Endothelial cell of umbilical vein (primary cell): ENCODE measurements at regions of chr5 and their contacts with region 1.

Region 1: GRCh38 chr5:140261403-140262171 is 41.3 kb downstream of the PFDN1 start:
- DNase-seq: peak; percentile 97
- H3K4me3 ChIP-seq: peak overlapping the region in 1 of 3 experiments; percentile 23
- H3K27ac ChIP-seq: peak overlapping the region; percentile 84
- H3K4me1 ChIP-seq: peaks cover 30% of the 10 kb centered on the region
- H3K27me3 ChIP-seq: no peaks in the 10 kb centered on the region
- CTCF ChIP-seq: no peak
- POLR2A ChIP-seq: peak; percentile 53

Region 2: DNA sequence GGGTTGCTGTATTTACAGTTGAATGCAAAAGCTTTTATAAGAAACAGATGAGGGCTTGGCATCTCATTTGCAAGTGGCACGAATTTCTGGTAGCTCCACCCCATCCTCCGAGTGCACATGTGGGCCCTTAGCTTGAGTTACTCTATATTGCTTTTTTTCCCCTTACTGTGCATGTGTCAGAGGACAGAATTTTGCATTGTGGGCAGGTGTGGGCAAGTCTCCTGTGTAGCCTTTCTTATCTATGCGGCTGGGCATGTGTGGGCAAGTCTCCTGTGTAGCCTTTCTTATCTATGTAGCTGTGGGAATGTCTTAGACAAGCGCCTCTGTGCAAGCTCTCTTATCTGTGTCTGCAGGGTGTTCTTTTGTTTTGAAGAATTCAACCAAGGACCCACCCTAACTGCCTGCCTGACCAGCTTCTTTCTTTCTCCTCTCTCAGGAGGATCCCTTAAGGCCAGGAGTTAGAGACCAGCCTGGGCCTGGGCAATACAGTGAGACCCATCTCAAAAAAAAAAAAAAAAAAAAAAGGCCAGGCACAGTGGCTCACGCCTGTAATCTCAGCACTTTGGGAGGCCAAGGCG is 1029.4 kb before region 1 on chr5:
- CTCF ChIA-PET with region 1: no interaction called
- POLR2A ChIA-PET with region 1: no interaction called
- dilution Hi-C with region 1: no loop called
- intact Hi-C with region 1: no loop called
- DNase-seq: no peak
- H3K4me3 ChIP-seq: no peak overlapping the region
- H3K27ac ChIP-seq: no peak overlapping the region
- H3K4me1 ChIP-seq: no peaks in the 10 kb centered on the region
- H3K27me3 ChIP-seq: peaks cover 0 to 4% of the 10 kb centered on the region in 2 experiments
- CTCF ChIP-seq: no peak
- POLR2A ChIP-seq: no peak

Region 3: DNA sequence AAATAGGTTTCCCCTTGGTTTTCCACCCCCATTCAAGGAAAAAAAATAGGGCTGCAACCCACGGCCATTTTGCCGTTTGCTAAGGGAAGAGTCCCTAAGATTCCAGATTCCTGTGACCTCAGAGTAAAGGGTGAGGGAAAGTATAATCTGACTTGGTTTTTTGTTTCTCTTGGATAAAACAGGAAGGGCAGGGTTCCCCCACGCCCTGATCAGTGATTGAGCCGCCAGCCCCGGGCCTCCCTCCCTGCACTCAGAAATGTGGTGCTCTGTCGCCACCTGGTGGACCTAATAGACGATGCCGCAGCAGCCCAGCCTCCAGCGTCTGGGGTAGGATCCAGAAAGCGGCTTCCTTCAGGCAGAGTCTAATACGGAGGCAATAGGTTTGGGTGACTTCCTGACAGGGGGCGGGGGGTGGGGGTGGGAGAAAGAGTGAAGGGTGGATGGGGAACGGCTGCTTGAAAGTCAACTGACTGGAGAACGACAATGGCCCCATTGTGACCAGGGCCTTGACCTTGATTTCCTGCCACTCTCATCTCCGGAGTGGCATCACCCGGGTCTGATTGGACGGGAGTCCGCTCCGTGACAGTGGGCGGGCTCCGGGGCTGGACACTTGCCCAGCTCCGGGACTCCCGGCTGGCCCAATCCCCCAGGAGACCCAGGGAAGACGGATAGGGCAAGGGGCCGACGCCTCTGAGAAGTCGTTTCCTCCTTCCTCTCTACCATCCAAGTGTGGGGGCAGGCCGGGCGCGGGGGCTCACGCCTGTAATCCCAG is 104.4 kb before region 1 on chr5:
- CTCF ChIA-PET with region 1: no interaction called
- POLR2A ChIA-PET with region 1: no interaction called
- dilution Hi-C with region 1: no loop called
- intact Hi-C with region 1: no loop called
- DNase-seq: peak; percentile 75
- H3K4me3 ChIP-seq: peak overlapping the region in 2 of 3 experiments; percentile 19 to 24
- H3K27ac ChIP-seq: no peak overlapping the region
- H3K4me1 ChIP-seq: peaks cover 4% of the 10 kb centered on the region
- H3K27me3 ChIP-seq: no peaks in the 10 kb centered on the region
- CTCF ChIP-seq: peak; percentile 81 to 86
- POLR2A ChIP-seq: no peak

Region 4: GRCh38 chr5:140251527-140251973 is 10.0 kb before region 1 on chr5:
- CTCF ChIA-PET with region 1: interaction called, 64 read pairs
- POLR2A ChIA-PET with region 1: interaction called, 3 read pairs
- dilution Hi-C with region 1: no loop called
- intact Hi-C with region 1: loop called (anchors 1 kb)
- DNase-seq: peak; percentile 89
- H3K4me3 ChIP-seq: peak overlapping the region in 1 of 3 experiments; percentile 32
- H3K27ac ChIP-seq: peak overlapping the region; percentile 97
- H3K4me1 ChIP-seq: peaks cover 61% of the 10 kb centered on the region
- H3K27me3 ChIP-seq: no peaks in the 10 kb centered on the region
- CTCF ChIP-seq: no peak
- POLR2A ChIP-seq: peak; percentile 67

Region 5: GRCh38 chr5:140322751-140323731 is 61.5 kb after region 1 on chr5:
- CTCF ChIA-PET with region 1: interaction called, 9 read pairs
- POLR2A ChIA-PET with region 1: interaction called, 6 read pairs
- dilution Hi-C with region 1: no loop called
- intact Hi-C with region 1: loop called (anchors 1 kb)
- DNase-seq: peak; percentile 94
- H3K4me3 ChIP-seq: no peak overlapping the region
- H3K27ac ChIP-seq: peak overlapping the region; percentile 99
- H3K4me1 ChIP-seq: peaks cover 55% of the 10 kb centered on the region
- H3K27me3 ChIP-seq: no peaks in the 10 kb centered on the region
- CTCF ChIP-seq: no peak
- POLR2A ChIP-seq: no peak

Region 6: DNA sequence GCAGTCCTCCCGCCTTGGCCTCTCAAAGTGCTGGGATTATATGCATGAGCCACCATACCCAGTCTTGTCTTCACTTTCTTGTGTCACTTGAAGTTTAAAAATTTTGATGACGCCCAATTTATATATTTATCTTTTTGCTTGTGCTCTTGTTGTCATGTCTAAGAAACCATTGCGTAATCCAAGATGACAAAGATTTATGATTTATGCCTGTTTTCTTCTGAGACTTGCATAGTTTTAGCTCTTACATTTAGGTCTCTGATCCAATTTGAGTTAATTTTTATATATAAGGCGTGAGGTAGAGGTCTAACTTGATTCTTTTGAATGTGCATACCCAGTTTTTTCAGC is 158.6 kb after region 1 on chr5:
- CTCF ChIA-PET with region 1: no interaction called
- POLR2A ChIA-PET with region 1: no interaction called
- dilution Hi-C with region 1: no loop called
- intact Hi-C with region 1: no loop called
- DNase-seq: no peak
- H3K4me3 ChIP-seq: no peak overlapping the region
- H3K27ac ChIP-seq: no peak overlapping the region
- H3K4me1 ChIP-seq: no peaks in the 10 kb centered on the region
- H3K27me3 ChIP-seq: no peaks in the 10 kb centered on the region
- CTCF ChIP-seq: no peak
- POLR2A ChIP-seq: no peak